ENCODE measurements at regions of chr6 and their contacts with region 1.

Region 1: DNA sequence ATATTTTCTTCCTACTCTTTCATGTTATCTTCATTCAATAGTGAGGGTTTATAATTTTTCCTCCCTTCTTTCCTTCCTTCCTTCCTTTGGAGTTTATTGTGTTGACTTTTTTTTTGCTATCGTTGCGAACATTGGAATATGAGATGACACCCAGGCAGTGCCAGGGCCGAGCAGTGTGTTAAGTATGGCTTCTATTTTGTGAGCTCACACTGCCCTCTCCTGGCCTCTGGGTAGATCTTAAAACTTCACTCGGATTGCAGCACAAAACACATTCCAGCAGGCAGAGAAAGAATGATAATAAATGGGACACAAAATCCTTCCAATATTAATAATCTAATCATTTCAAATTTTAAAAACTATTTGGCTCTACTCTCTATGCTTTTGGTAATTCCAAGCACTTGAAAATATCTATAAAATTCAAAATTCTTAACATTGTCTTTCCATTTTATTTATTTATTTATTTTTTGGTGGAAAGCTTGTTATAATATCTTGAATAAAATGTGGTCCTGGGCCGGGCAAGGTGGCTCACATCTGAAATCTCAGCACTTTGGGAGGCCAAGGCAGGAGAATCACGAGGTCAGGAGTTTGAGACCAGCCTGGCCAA is 147.4 kb upstream of the OLIG3 start:
- DNase-seq: peak; percentile 27 to 93 (median 73)

Region 2: DNA sequence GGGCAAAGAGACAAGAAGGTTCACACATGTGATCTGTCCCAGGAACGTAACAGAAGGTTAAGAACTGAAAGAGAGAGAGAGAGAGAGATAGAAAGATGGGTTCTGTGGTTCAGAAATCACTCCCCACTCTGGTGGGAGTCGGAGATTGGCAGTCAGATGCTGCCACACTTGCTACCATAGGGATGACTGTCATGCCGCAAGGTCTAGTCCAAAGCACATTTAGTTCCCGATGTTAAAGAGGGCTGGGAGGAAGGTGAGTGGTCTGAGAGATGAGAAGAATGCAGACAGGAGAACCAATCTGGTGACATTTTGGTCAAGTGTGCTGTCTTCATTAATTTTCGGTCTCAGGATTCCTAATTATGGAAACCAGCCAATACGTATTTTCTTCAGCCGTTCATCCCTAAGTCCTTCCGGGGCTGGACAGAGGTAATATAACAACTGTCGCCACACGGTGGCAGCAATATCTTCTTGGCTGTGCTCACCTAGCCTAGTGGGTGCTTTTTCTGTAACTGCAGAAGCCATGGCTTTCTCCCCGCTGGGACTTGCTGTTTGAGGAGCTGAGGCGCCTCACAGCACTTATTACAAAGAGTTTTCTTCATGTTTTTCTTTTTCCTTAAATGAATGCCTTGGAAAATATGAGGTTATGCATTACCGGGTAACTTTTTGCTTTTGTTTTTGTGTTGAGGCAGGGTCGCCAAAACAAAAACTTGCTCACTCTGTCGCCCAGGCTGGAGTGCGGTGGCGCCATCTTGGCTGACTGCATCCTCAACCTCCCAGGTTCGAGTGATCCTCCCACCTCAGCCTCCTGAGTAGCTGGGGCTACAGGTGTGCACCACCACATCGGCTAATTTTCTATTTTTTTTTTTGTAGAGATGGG is 673.5 kb before region 1 on chr6:
- intact Hi-C with region 1: loop called (anchors 10 kb)
- DNase-seq: peak in 8 of 10 donors; percentile 50 to 87 (median 62)

Region 3: GRCh38 chr6:137076277-137077068 is 565.1 kb before region 1 on chr6:
- intact Hi-C with region 1: loop called (anchors 1 kb)
- DNase-seq: peak in 8 of 10 donors; percentile 35 to 93 (median 56)

Region 4: GRCh38 chr6:137094411-137095008 is 547.1 kb before region 1 on chr6:
- intact Hi-C with region 1: loop called (anchors 5 kb)
- DNase-seq: peak in 5 of 10 donors; percentile 21 to 59 (median 51)

Region 5: DNA sequence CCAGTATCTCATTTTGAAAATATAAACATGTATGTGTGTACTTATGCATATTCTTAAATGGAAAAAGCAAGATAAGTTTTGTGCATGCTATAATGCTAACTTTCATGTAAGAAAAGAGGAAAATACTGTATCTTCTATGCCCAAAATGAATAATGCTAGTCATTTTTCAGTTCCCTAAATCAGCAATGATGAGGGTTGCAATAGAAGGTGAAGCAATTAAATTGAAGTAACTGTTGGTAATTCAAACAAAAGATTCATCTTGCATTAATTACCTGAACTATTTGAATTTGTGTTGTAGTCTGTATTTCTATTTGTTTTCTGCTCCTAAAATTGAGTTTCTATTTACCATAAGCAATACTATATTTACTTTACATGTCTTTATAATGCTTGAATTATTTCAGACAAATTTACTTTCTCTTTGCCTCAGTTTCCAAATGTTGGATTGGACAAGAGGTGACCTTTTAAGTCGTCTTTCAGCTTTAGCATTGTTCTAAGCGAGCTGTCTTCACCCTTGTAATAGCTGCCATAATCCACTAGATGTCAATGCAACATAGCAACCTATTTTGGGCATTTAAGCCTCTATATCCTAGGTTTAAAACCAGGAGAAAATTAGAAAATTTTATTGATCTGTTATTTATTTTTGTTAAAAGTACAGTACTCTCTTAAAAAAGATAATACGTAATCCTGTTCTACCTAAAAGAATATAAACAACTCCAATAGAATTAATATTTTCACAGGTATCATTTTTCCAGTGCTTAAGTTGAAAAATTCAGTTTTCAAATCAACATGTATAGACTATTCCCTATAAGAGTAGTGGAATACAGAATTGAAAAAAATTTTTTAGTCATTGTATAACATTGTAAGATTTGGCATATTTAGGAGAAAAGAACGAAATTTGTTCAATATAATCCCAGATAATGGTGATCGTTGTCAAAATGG is 370.1 kb before region 1 on chr6:
- intact Hi-C with region 1: loop called (anchors 1 kb)
- DNase-seq: no peak

Region 6: DNA sequence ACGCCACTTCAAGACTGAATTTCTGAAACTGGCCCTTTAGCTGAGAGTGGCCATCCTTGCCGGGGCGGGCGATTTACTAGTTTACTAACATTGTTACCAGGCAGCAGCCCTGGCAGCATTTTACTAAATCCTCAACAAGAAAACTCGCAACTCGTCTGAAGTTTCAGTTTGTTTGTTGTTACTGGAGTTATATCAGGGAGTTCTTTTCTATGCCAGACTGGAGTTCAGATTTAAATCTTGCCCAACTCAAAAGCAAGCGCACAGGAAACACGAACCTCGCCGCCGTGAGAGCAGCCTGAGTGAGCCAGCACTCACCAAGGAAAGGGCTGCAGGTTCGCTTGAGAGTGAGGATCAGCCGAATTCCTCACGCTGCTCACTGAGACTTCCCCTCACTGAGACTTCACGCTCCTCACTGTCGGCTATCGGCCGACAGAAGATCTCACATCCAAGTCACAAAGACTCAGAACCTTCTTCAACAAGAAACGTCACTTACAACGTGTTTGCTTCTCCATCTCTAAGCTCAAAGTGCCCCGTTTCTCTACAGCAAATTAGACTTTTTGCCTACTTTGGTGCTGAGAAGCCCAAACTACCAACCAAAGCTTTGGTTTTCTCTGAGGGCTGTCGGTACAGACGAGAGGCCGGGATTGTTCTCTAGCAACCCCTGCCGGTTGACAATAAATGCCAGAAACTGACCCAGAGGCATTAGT is 226.3 kb before region 1 on chr6:
- intact Hi-C with region 1: loop called (anchors 5 kb)
- DNase-seq: peak in 8 of 10 donors; percentile 22 to 83 (median 68)

Region 7: GRCh38 chr6:137571854-137572253 is 69.7 kb before region 1 on chr6:
- intact Hi-C with region 1: no loop called
- DNase-seq: no peak